GM12878 (cell line): ENCODE measurements at regions of chr7 and their contacts with region 1.

Region 1: DNA sequence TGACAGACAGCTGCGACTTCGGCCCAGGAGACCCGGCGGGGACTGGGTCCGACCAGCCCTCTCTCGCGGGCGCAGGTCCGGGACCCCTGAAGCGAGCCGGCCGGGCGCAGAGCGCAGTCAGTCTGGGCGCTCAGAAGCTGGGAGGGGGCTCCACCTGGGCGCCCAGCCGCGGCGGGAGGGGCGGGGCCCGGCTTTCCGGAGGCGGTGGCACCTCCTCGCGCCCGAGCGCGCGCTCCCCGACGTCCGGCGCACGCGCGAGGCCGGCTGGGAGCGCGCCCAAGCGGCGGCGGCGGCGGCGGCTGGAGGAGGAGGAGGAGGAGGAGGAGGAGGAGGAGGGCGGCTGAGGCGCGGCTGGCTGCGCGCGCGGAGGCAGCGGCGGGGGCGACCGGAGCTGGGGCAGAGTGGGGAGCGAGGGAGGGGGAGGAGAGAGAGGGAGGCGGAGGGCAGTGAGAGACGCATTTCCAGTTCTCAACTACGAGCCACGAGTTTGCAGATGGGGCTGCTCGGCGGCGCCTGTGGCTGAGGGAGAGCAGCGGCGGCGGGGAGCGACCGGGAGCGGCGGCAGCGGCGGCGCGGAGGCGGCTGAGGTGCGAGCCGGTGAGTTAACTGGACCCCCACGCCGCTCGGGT is at the start of gene PALS2:
- DNase-seq: no peak
- ATAC-seq: peak; percentile 61
- H3K4me3 ChIP-seq: peak within 1 kb of the TSS; percentile 81
- H3K27ac ChIP-seq: peak within 1 kb of the TSS; percentile 60
- H3K4me1 ChIP-seq: peaks cover under 1% of the 10 kb centered on the region; the same call in 1 of the 2 replicates
- H3K27me3 ChIP-seq: peaks cover 0 to 2% of the 10 kb centered on the region in 2 experiments; a peak in 3 of 4 replicates
- CTCF ChIP-seq: no peak
- EP300 ChIP-seq: no peak
- POLR2A ChIP-seq: peak; percentile 66
- RAD21 ChIP-seq: no peak
- polyA plus RNA-seq, gene PALS2: 15.2 to 21.6 TPM

Region 2: GRCh38 chr7:23546897-23547572 is 1026.1 kb before region 1 on chr7:
- CTCF ChIA-PET with region 1: no interaction called
- POLR2A ChIA-PET with region 1: no interaction called
- RAD21 ChIA-PET with region 1: no interaction called
- SMC1A ChIA-PET with region 1: no interaction called
- in situ Hi-C with region 1: no loop called
- intact Hi-C with region 1: loop called (anchors 10 kb)
- DNase-seq: peak; percentile 74
- ATAC-seq: peak; percentile 79
- H3K4me3 ChIP-seq: no peak overlapping the region
- H3K27ac ChIP-seq: peak overlapping the region; percentile 18; the same call in 1 of the 2 replicates
- H3K4me1 ChIP-seq: peaks cover 13% of the 10 kb centered on the region
- H3K27me3 ChIP-seq: no peaks in the 10 kb centered on the region
- CTCF ChIP-seq: peak; percentile 83 to 95 (median 93); a peak in 5 of 6 replicates
- EP300 ChIP-seq: no peak
- POLR2A ChIP-seq: no peak
- RAD21 ChIP-seq: peak; percentile 89

Region 3: DNA sequence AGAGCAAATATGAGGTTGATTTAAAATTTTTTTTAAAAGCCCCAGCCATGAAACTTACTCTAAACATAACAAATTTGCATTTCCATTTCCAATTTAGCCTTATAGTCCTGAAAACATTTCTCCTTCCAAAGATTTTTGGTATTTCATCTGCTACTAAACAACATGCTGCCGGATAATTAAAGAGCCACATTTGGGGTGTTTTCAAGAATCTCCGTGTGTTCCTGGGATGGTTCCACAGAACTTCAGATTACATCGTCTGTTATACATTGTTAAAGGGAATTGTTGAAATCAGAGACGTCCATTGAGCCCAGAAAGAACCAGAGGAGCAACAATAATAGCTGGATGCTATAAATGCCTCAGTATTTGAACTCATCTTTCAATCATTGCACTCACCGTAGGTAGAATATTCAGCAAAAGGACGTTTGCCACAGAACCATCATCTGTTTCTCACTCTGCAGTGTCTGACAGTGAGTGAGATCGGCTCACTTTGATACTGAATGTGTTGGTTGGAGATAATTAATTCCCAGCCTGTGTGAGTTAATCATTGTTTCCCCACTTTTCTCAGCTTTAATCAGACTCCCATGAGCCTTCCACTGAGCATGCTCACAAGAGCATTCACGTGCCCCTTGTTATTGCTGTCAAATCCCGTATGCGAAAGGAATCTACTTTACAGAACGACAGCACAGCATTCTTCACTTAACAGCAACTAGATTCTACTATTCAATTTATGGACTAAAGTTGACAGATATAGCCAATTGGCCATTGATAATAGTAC is 128.3 kb before region 1 on chr7:
- CTCF ChIA-PET with region 1: no interaction called
- POLR2A ChIA-PET with region 1: no interaction called
- RAD21 ChIA-PET with region 1: no interaction called
- SMC1A ChIA-PET with region 1: no interaction called
- in situ Hi-C with region 1: no loop called
- intact Hi-C with region 1: no loop called
- DNase-seq: no peak
- ATAC-seq: no peak
- H3K4me3 ChIP-seq: no peak overlapping the region
- H3K27ac ChIP-seq: no peak overlapping the region
- H3K4me1 ChIP-seq: peaks cover 12% of the 10 kb centered on the region
- H3K27me3 ChIP-seq: no peaks in the 10 kb centered on the region
- CTCF ChIP-seq: no peak
- EP300 ChIP-seq: no peak
- POLR2A ChIP-seq: no peak
- RAD21 ChIP-seq: no peak

Region 4: DNA sequence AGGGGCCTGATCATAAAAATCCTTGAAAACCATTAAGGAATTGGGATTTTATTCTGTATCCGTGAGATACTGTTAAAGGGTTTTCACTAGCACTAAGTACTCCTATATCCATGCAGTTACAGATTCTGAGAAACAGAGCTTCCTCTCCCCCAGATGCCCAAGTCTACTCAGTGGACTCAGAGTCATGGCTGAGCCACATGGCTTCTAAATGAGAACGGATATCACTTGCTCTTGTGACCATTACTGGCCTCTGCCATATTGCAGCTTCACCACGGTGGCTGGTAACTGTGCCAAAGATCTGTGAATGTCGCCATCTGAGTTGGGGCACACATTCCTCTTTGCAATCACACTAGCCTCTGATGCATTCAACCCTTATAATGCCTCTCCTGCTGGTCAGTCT is 41.9 kb before region 1 on chr7:
- CTCF ChIA-PET with region 1: no interaction called
- POLR2A ChIA-PET with region 1: no interaction called
- RAD21 ChIA-PET with region 1: no interaction called
- SMC1A ChIA-PET with region 1: no interaction called
- in situ Hi-C with region 1: no loop called
- intact Hi-C with region 1: no loop called
- DNase-seq: no peak
- ATAC-seq: no peak
- H3K4me3 ChIP-seq: no peak overlapping the region
- H3K27ac ChIP-seq: no peak overlapping the region
- H3K4me1 ChIP-seq: no peaks in the 10 kb centered on the region
- H3K27me3 ChIP-seq: no peaks in the 10 kb centered on the region
- CTCF ChIP-seq: no peak
- EP300 ChIP-seq: no peak
- POLR2A ChIP-seq: no peak
- RAD21 ChIP-seq: no peak

Region 5: GRCh38 chr7:24587848-24588247 is 14.7 kb after region 1 on chr7:
- CTCF ChIA-PET with region 1: interaction called, 147 read pairs
- POLR2A ChIA-PET with region 1: interaction called, 3 read pairs
- RAD21 ChIA-PET with region 1: interaction called, 17 read pairs
- SMC1A ChIA-PET with region 1: interaction called, 67 read pairs
- in situ Hi-C with region 1: no loop called
- intact Hi-C with region 1: loop called (anchors 1 kb)
- DNase-seq: no peak
- ATAC-seq: peak; percentile 92
- H3K4me3 ChIP-seq: peak overlapping the region; percentile 18; the same call in 1 of the 2 replicates
- H3K27ac ChIP-seq: peak overlapping the region; percentile 30
- H3K4me1 ChIP-seq: peaks cover 24% of the 10 kb centered on the region
- H3K27me3 ChIP-seq: no peaks in the 10 kb centered on the region
- CTCF ChIP-seq: peak; percentile 67 to 79 (median 73)
- EP300 ChIP-seq: no peak
- POLR2A ChIP-seq: no peak
- RAD21 ChIP-seq: peak; percentile 91

Region 6: GRCh38 chr7:24622646-24623182 is 49.6 kb after region 1 on chr7:
- CTCF ChIA-PET with region 1: interaction called, 7 read pairs
- POLR2A ChIA-PET with region 1: no interaction called
- RAD21 ChIA-PET with region 1: interaction called, 5 read pairs
- SMC1A ChIA-PET with region 1: interaction called, 3 read pairs
- in situ Hi-C with region 1: no loop called
- intact Hi-C with region 1: loop called (anchors 5 kb)
- DNase-seq: no peak
- ATAC-seq: peak; percentile 61
- H3K4me3 ChIP-seq: peak overlapping the region; percentile 13; the same call in 1 of the 2 replicates
- H3K27ac ChIP-seq: peak overlapping the region; percentile 57
- H3K4me1 ChIP-seq: peaks cover 4% of the 10 kb centered on the region; the same call in 1 of the 2 replicates
- H3K27me3 ChIP-seq: no peaks in the 10 kb centered on the region
- CTCF ChIP-seq: no peak
- EP300 ChIP-seq: no peak
- POLR2A ChIP-seq: no peak
- RAD21 ChIP-seq: no peak

Region 7: DNA sequence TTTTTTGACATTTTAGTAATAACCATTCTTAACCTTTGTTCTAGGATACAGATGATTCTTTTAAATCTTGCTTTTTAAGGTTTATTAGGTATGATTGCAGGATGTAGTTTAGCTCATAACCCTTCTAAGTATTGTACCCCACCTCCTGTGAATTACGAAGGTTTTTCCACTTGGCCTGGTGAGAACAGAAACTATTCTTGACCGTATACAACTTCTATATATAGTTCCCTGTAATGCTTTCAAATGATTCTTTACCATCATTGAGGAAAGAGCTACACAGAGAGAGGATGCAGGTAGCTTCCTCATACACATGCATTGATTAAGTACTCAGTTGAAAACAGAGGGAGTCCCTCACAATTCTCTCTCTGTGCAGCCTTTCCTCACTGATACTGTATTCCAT is 86.4 kb after region 1 on chr7:
- CTCF ChIA-PET with region 1: interaction called, 136 read pairs
- POLR2A ChIA-PET with region 1: no interaction called
- RAD21 ChIA-PET with region 1: interaction called, 106 read pairs
- SMC1A ChIA-PET with region 1: interaction called, 142 read pairs
- in situ Hi-C with region 1: loop called (anchors 5 kb)
- intact Hi-C with region 1: no loop called
- DNase-seq: peak; percentile 27
- ATAC-seq: peak; percentile 92
- H3K4me3 ChIP-seq: no peak overlapping the region; the same call in 1 of the 2 replicates
- H3K27ac ChIP-seq: peak overlapping the region; percentile 20; the same call in 1 of the 2 replicates
- H3K4me1 ChIP-seq: peaks cover 3% of the 10 kb centered on the region; the same call in 1 of the 2 replicates
- H3K27me3 ChIP-seq: no peaks in the 10 kb centered on the region
- CTCF ChIP-seq: no peak
- EP300 ChIP-seq: no peak
- POLR2A ChIP-seq: no peak
- RAD21 ChIP-seq: no peak

Region 8: GRCh38 chr7:24784277-24784676 is 211.2 kb after region 1 on chr7:
- CTCF ChIA-PET with region 1: no interaction called
- POLR2A ChIA-PET with region 1: no interaction called
- RAD21 ChIA-PET with region 1: no interaction called
- SMC1A ChIA-PET with region 1: no interaction called
- in situ Hi-C with region 1: no loop called
- intact Hi-C with region 1: no loop called
- DNase-seq: no peak
- ATAC-seq: no peak
- H3K4me3 ChIP-seq: no peak overlapping the region
- H3K27ac ChIP-seq: no peak overlapping the region
- H3K4me1 ChIP-seq: peaks cover 8% of the 10 kb centered on the region
- H3K27me3 ChIP-seq: no peaks in the 10 kb centered on the region
- CTCF ChIP-seq: no peak
- EP300 ChIP-seq: no peak
- POLR2A ChIP-seq: no peak
- RAD21 ChIP-seq: no peak